ENCODE measurements at regions of chr20 and their contacts with region 1.

Region 1: DNA sequence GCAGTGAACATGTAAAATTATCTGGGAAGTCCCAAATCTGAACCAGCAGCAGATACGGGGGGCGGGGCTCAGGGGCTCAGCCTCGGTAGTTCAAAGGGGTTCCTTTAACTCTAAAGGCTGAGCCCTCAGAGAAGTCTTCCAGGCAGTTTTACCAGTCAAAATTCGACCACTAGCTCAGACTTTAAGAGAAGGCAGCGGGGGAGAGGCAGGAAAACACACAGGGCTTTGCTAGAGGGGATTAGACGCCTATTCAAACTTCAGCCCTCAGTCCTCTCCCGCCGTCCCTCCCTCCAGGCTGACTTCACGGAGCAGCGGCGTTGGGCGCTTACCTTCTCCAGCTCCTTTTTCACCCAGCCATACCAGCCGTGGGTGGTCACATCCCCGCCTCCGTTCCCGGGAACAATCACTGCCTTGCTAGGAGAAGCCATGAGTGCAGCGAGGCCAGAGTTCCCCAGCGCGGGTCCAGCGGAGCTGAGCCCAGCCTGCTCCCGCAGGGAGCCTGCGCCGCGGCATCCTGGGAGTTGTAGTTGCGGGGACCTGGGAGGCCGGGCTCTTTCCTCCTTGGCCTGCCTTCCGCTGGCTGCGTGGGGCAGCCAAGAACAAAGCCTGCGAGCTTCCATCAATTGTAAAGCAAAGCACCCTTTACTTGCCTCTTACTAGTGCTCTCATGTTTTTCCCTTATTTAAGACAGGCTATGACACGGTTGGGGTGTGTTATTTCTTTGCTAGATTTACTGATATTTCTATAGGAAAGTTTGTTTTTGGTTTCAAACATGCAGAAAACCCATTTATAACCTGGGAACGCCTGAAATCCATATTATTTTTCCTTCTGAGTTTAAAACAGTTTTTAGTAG is at the start of gene RBBP9:
- DNase-seq: peak; percentile 31
- ATAC-seq: peak; percentile 100
- H3K4me3 ChIP-seq: peak within 1 kb of the TSS; percentile 73
- H3K27ac ChIP-seq: peak within 1 kb of the TSS; percentile 45
- H3K4me1 ChIP-seq: no peaks in the 10 kb centered on the region
- H3K27me3 ChIP-seq: no peaks in the 10 kb centered on the region
- CTCF ChIP-seq: no peak
- EP300 ChIP-seq: no peak
- POLR2A ChIP-seq: peak; percentile 73
- RAD21 ChIP-seq: no peak
- polyA plus RNA-seq, gene RBBP9: 7.1 to 9.2 TPM

Region 2: GRCh38 chr20:18428490-18429173 is 68.3 kb before region 1 on chr20:
- CTCF ChIA-PET with region 1: no interaction called
- POLR2A ChIA-PET with region 1: no interaction called
- RAD21 ChIA-PET with region 1: no interaction called
- SMC1A ChIA-PET with region 1: no interaction called
- in situ Hi-C with region 1: no loop called
- intact Hi-C with region 1: no loop called
- DNase-seq: no peak
- ATAC-seq: no peak
- H3K4me3 ChIP-seq: no peak overlapping the region
- H3K27ac ChIP-seq: no peak overlapping the region
- H3K4me1 ChIP-seq: no peaks in the 10 kb centered on the region
- H3K27me3 ChIP-seq: no peaks in the 10 kb centered on the region
- CTCF ChIP-seq: no peak
- EP300 ChIP-seq: no peak
- POLR2A ChIP-seq: no peak
- RAD21 ChIP-seq: no peak

Region 3: GRCh38 chr20:18466894-18467730 is 29.9 kb before region 1 on chr20 and contains the starts of genes DZANK1 and POLR3F:
- CTCF ChIA-PET with region 1: interaction called, 3 read pairs
- POLR2A ChIA-PET with region 1: interaction called, 20 read pairs
- RAD21 ChIA-PET with region 1: interaction called, 6 read pairs
- SMC1A ChIA-PET with region 1: interaction called, 15 read pairs
- in situ Hi-C with region 1: no loop called
- intact Hi-C with region 1: no loop called
- DNase-seq: peak; percentile 75
- ATAC-seq: peak; percentile 100
- H3K4me3 ChIP-seq: peak within 1 kb of the TSS; percentile 93
- H3K27ac ChIP-seq: peak within 1 kb of the TSS; percentile 96
- H3K4me1 ChIP-seq: no peaks in the 10 kb centered on the region; the same call in 1 of the 2 replicates
- H3K27me3 ChIP-seq: no peaks in the 10 kb centered on the region
- CTCF ChIP-seq: no peak
- EP300 ChIP-seq: no peak
- POLR2A ChIP-seq: peak; percentile 86
- RAD21 ChIP-seq: no peak
- polyA plus RNA-seq, gene DZANK1: 6.1 to 7.6 TPM
- polyA plus RNA-seq, gene POLR3F: 9.5 to 12.4 TPM

Region 4: GRCh38 chr20:18566892-18567742 is 70.2 kb after region 1 on chr20 and contains the start of gene SMIM26:
- CTCF ChIA-PET with region 1: interaction called, 3 read pairs
- POLR2A ChIA-PET with region 1: interaction called, 7 read pairs
- RAD21 ChIA-PET with region 1: no interaction called
- SMC1A ChIA-PET with region 1: interaction called, 3 read pairs
- in situ Hi-C with region 1: no loop called
- intact Hi-C with region 1: loop called (anchors 2 kb)
- DNase-seq: peak; percentile 80
- ATAC-seq: peak; percentile 100
- H3K4me3 ChIP-seq: peak within 1 kb of the TSS; percentile 98
- H3K27ac ChIP-seq: peak within 1 kb of the TSS; percentile 78
- H3K4me1 ChIP-seq: peaks cover 4% of the 10 kb centered on the region; the same call in 1 of the 2 replicates
- H3K27me3 ChIP-seq: no peaks in the 10 kb centered on the region
- CTCF ChIP-seq: no peak
- EP300 ChIP-seq: no peak
- POLR2A ChIP-seq: peak; percentile 97
- RAD21 ChIP-seq: no peak
- polyA plus RNA-seq, gene SMIM26: 303 to 329 TPM